Posterior cingulate gyrus (tissue), 11 donors: ENCODE measurements at regions of chr3 and their contacts with region 1.

Region 1: DNA sequence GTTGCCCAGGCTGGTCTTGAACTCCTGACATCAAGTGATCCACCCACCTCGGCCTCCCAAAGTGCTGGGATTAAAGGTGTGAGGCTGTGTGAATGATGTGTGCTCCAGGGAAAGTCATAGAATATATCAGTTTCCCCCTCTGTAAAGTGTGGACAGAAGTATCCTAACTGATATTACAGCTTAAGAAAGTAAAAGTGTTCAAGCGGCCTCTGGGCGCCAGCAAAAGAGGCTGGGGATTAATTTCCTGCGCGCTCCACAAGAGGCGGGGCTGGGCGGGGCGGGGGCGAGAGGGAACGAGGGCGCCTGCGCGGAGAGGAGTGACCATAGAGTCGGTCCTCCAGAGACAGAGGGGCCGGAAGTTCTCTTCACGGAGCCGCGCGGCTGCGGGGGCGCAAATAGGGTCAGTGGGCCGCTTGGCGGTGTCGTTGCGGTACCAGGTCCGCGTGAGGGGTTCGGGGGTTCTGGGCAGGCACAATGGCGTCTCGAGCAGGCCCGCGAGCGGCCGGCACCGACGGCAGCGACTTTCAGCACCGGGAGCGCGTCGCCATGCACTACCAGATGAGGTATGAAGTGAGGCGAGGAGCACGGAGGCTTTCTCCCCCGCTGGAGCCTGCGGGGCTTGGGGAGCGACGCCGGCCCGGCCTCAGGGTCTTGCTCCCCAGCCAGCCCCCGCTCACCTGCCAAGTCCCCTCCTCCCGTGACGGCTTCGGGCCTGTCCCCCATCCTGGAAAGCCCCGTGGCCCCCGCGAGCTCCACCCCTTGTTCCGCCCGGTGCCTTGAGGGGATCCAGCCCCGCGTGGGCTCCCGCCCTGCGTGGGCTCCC is at the start of gene JAGN1:
- DNase-seq: peak; percentile 83 to 98 (median 87)

Region 2: GRCh38 chr3:9932843-9933560 is 42.5 kb after region 1 on chr3:
- intact Hi-C with region 1: loop called (anchors 5 kb)
- DNase-seq: peak in 9 of 10 donors; percentile 58 to 95 (median 73)

Region 3: GRCh38 chr3:9946112-9947024 is 55.9 kb after region 1 on chr3:
- intact Hi-C with region 1: loop called (anchors 1 kb)
- DNase-seq: peak; percentile 68 to 97 (median 74)

Region 4: GRCh38 chr3:10010486-10011465 is 120.3 kb after region 1 on chr3:
- intact Hi-C with region 1: no loop called
- DNase-seq: peak; percentile 87 to 99 (median 95)